H1 (cell line): ENCODE measurements at regions of chr5 and their contacts with region 1.

Region 1: GRCh38 chr5:1167728-1168709 is 33.4 kb upstream of the SLC6A19 start:
- DNase-seq: peak in 1 of 2 experiments; percentile 82
- H3K4me3 ChIP-seq: peak overlapping the region in 2 of 4 experiments; percentile 15 to 46; a peak in 2 of 8 replicates
- H3K27ac ChIP-seq: no peak overlapping the region
- H3K4me1 ChIP-seq: peaks cover 0 to 5% (median 2%) of the 10 kb centered on the region in 4 experiments; a peak in 2 of 7 replicates
- H3K27me3 ChIP-seq: no peaks in the 10 kb centered on the region; a peak in 1 of 7 replicates
- CTCF ChIP-seq: peak in 2 of 3 experiments; percentile 92 to 94; a peak in 3 of 4 replicates
- EP300 ChIP-seq: no peak
- POLR2A ChIP-seq: no peak
- RAD21 ChIP-seq: peak; percentile 93 to 96

Region 2: GRCh38 chr5:895414-896120 is 272.5 kb before region 1 on chr5:
- CTCF ChIA-PET with region 1: no interaction called
- POLR2A ChIA-PET with region 1: no interaction called
- DNase-seq: no peak
- H3K4me3 ChIP-seq: no peak overlapping the region
- H3K27ac ChIP-seq: no peak overlapping the region
- H3K4me1 ChIP-seq: peaks cover 0 to 13% (median 7%) of the 10 kb centered on the region in 4 experiments; a peak in 6 of 7 replicates
- H3K27me3 ChIP-seq: no peaks in the 10 kb centered on the region
- CTCF ChIP-seq: no peak
- EP300 ChIP-seq: no peak
- POLR2A ChIP-seq: no peak
- RAD21 ChIP-seq: no peak

Region 3: GRCh38 chr5:989961-990530 is 178.0 kb before region 1 on chr5:
- CTCF ChIA-PET with region 1: interaction called, 16 read pairs
- POLR2A ChIA-PET with region 1: no interaction called
- DNase-seq: peak in 1 of 2 experiments; percentile 54
- H3K4me3 ChIP-seq: no peak overlapping the region
- H3K27ac ChIP-seq: no peak overlapping the region
- H3K4me1 ChIP-seq: no peaks in the 10 kb centered on the region
- H3K27me3 ChIP-seq: no peaks in the 10 kb centered on the region
- CTCF ChIP-seq: peak; percentile 64 to 68 (median 67)
- EP300 ChIP-seq: no peak
- POLR2A ChIP-seq: no peak
- RAD21 ChIP-seq: peak; percentile 64 to 81

Region 4: DNA sequence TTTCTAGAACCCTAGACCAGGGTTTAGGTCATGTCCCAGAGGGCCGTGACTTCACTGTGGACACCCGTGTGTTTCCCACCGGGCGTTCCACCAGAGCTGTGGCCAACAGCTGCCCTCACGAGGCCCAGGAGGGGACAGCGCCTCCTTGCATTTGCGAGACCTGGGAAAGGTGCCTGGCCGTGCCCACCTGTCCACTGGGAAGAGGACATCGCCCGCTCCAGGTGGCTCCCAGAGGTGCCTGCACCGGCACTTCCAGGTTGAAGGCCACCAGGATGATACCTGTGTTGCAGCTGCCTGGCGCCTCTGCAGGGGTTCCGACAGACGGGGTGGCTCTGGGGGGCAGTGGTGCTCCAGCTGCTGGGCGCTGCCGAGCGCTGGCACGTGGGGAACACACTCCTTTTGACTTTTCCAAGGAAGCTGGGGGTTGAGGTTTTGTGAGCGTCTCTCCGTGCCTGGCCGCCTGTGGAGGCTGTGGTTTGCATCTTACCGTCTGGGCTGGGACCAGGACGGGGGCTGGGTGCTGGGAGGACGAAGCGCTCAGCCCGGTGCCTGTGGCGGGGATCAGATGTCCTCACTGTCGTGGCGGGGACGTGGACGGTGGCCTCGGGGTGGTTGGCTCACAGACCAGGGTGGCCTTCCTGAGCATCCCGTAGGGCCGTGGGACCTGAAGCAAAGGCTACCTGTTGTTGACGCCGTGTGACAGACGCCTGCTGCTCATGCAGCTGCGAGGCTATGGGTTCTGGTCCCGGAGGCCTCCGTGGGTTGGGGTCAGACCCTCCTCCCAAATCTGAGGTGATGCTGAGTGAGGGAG is 140.2 kb before region 1 on chr5:
- CTCF ChIA-PET with region 1: interaction called, 15 read pairs
- POLR2A ChIA-PET with region 1: no interaction called
- DNase-seq: no peak
- H3K4me3 ChIP-seq: no peak overlapping the region
- H3K27ac ChIP-seq: no peak overlapping the region
- H3K4me1 ChIP-seq: peaks cover 0 to 3% (median 1%) of the 10 kb centered on the region in 4 experiments; a peak in 3 of 7 replicates
- H3K27me3 ChIP-seq: no peaks in the 10 kb centered on the region
- CTCF ChIP-seq: no peak
- EP300 ChIP-seq: no peak
- POLR2A ChIP-seq: no peak
- RAD21 ChIP-seq: no peak

Region 5: GRCh38 chr5:1108023-1108864 is 59.8 kb before region 1 on chr5:
- CTCF ChIA-PET with region 1: interaction called, 10 read pairs
- POLR2A ChIA-PET with region 1: interaction called, 3 read pairs
- DNase-seq: no peak
- H3K4me3 ChIP-seq: no peak overlapping the region
- H3K27ac ChIP-seq: peak overlapping the region; percentile 58; the same call in 1 of the 2 replicates
- H3K4me1 ChIP-seq: peaks cover 7 to 62% (median 47%) of the 10 kb centered on the region in 4 experiments
- H3K27me3 ChIP-seq: no peaks in the 10 kb centered on the region; a peak in 1 of 7 replicates
- CTCF ChIP-seq: no peak
- EP300 ChIP-seq: no peak
- POLR2A ChIP-seq: no peak
- RAD21 ChIP-seq: no peak

Region 6: GRCh38 chr5:1140171-1140817 is 27.7 kb before region 1 on chr5:
- CTCF ChIA-PET with region 1: interaction called, 10 read pairs
- POLR2A ChIA-PET with region 1: no interaction called
- DNase-seq: peak; percentile 36 to 79
- H3K4me3 ChIP-seq: no peak overlapping the region
- H3K27ac ChIP-seq: no peak overlapping the region
- H3K4me1 ChIP-seq: peaks cover 0 to 13% (median 2%) of the 10 kb centered on the region in 4 experiments; a peak in 5 of 7 replicates
- H3K27me3 ChIP-seq: no peaks in the 10 kb centered on the region
- CTCF ChIP-seq: peak in 2 of 3 experiments; percentile 46 to 62; a peak in 3 of 4 replicates
- EP300 ChIP-seq: no peak
- POLR2A ChIP-seq: no peak
- RAD21 ChIP-seq: peak; percentile 70 to 80

Region 7: DNA sequence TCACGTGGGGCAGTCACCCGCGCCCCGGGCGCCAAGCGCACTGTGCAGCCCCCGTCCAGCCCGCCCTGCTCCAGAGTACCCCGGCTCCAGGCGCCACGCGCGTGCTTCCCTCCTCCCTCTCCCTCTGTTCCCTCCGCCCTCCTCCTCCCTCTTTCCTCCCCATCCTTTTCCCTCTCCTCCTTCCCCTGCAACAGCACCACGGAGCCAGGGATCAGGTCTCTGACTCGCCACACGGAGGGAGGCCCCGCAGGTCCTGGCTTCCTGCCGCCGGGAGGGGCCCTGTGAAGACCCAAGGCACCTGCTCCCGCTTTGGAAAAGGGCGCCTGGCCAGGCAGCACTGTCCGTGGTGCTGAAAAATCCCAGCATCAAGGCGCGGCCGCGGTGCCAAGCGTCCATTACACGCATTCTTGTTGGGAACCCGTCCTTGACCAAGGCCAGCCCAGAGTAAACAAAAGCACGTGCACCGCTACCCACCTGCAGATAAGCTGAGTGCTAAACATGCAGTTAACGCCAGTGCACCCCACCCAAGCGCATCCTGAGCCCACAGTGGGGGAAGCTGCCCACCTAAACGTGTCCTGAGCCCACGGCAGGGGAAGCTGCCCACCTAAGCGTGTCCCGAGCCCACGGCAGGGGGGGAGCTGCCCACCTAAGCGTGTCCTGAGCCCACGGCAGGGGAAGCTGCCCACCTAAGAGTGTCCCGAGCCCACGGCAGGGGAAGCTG is 78.9 kb after region 1 on chr5:
- CTCF ChIA-PET with region 1: interaction called, 13 read pairs
- POLR2A ChIA-PET with region 1: no interaction called
- DNase-seq: peak; percentile 33 to 91
- H3K4me3 ChIP-seq: no peak overlapping the region
- H3K27ac ChIP-seq: no peak overlapping the region
- H3K4me1 ChIP-seq: peaks cover 0 to 9% (median under 1%) of the 10 kb centered on the region in 4 experiments; a peak in 5 of 7 replicates
- H3K27me3 ChIP-seq: no peaks in the 10 kb centered on the region; a peak in 1 of 7 replicates
- CTCF ChIP-seq: no peak
- EP300 ChIP-seq: no peak
- POLR2A ChIP-seq: no peak
- RAD21 ChIP-seq: peak in 1 of 2 experiments; percentile 14; a peak in 1 of 4 replicates

Region 8: GRCh38 chr5:1409381-1410110 is 241.5 kb after region 1 on chr5:
- CTCF ChIA-PET with region 1: no interaction called
- POLR2A ChIA-PET with region 1: no interaction called
- DNase-seq: peak in 1 of 2 experiments; percentile 78
- H3K4me3 ChIP-seq: no peak overlapping the region
- H3K27ac ChIP-seq: no peak overlapping the region
- H3K4me1 ChIP-seq: peaks cover 0 to 14% (median 8%) of the 10 kb centered on the region in 4 experiments; a peak in 5 of 7 replicates
- H3K27me3 ChIP-seq: no peaks in the 10 kb centered on the region
- CTCF ChIP-seq: no peak
- EP300 ChIP-seq: no peak
- POLR2A ChIP-seq: no peak
- RAD21 ChIP-seq: 0 out of 4 replicates have a peak, but pooled peaks of 1 of the 2 experiments have one; percentile 8